ENCODE measurements at regions of chr3 and their contacts with region 1.

Region 1: DNA sequence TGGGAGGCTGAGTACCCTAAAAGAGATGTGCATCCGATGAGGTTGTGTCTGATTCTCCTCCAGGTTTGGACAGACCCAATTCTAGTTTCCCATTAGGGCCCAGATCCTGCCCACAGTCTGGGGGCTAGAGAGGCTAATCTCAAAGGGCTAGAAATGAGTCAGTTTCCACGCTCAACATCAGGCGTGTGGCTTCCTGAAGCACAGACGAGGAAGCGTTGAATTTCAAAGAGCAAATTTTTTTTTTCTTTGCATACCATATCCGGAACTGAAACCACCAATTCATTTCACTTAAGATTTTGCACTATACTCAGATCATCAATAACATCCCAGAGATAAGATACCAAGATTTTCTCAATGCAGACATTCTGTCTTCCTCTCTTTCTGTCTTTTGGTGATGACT is 173.8 kb upstream of the BCL6 start:
- DNase-seq: peak; percentile 69
- ATAC-seq: peak; percentile 50
- H3K4me3 Mint-ChIP-seq: peak overlapping the region; percentile 59
- H3K27ac Mint-ChIP-seq: peak overlapping the region; percentile 86
- H3K4me1 Mint-ChIP-seq: peaks cover 70% of the 10 kb centered on the region
- H3K27me3 Mint-ChIP-seq: peaks cover 2% of the 10 kb centered on the region

Region 2: DNA sequence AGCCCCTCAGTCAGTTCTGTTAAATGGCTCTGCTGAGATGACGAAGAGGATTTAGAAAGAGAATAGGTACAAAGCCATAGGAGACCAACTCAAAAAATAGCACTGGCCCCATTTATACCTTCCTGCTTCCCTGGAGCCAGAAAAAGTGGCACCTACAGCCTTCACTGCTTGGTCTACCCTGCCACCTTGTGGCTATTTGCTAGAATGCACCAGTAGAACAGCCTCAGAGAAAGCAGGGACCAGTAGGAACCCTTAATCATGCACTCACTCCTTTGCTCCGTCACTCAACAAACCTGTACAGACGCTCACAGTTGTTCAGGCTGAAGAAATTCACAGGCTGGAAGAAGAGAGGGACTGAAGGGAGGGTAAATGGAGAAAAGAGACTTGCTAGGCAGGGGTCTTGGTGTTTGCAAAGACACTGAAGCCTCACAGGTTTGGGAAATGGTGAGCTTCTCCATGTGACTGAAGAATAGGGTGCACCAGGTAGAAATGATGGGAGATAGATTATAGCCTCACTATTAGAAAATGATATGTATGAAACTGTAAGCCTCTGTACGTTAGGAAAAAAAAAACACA is 204.6 kb before region 1 on chr3:
- CTCF ChIA-PET with region 1: no interaction called
- POLR2A ChIA-PET with region 1: no interaction called
- intact Hi-C with region 1: no loop called
- DNase-seq: peak; percentile 82
- ATAC-seq: peak; percentile 80
- H3K4me3 Mint-ChIP-seq: no peak overlapping the region
- H3K27ac Mint-ChIP-seq: no peak overlapping the region
- H3K4me1 Mint-ChIP-seq: peaks cover 12% of the 10 kb centered on the region
- H3K27me3 Mint-ChIP-seq: no peaks in the 10 kb centered on the region

Region 3: GRCh38 chr3:187745201-187746058 is 173.6 kb before region 1 on chr3 and contains the start of gene BCL6:
- CTCF ChIA-PET with region 1: interaction called, 17 read pairs
- POLR2A ChIA-PET with region 1: interaction called, 5 read pairs
- intact Hi-C with region 1: loop called (anchors 1 kb)
- DNase-seq: peak; percentile 92
- ATAC-seq: peak; percentile 50
- H3K4me3 Mint-ChIP-seq: peak within 1 kb of the TSS; percentile 91
- H3K27ac Mint-ChIP-seq: peak within 1 kb of the TSS; percentile 99
- H3K4me1 Mint-ChIP-seq: peaks cover 63% of the 10 kb centered on the region
- H3K27me3 Mint-ChIP-seq: no peaks in the 10 kb centered on the region
- total RNA-seq, gene BCL6: 42.9 to 52.8 TPM

Region 4: DNA sequence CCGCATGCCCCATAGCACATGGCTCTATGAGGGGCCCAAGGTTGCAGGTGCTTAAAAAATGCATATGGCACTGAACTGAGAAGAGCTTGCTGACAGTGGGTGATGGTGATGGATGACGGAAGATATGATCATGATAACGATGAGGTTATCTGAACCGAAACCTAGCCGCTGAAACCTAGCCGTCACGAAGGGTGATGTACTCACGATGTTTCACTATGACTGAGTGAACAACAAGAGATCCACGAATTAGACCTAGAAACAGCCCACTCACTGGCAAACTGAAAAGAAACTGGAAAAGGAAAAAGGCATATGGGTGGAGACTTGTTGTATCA is 116.2 kb before region 1 on chr3:
- CTCF ChIA-PET with region 1: interaction called, 4 read pairs
- POLR2A ChIA-PET with region 1: interaction called, 3 read pairs
- intact Hi-C with region 1: loop called (anchors 1 kb)
- DNase-seq: peak; percentile 86
- ATAC-seq: peak; percentile 60
- H3K4me3 Mint-ChIP-seq: peak overlapping the region; percentile 34
- H3K27ac Mint-ChIP-seq: peak overlapping the region; percentile 81
- H3K4me1 Mint-ChIP-seq: peaks cover 93% of the 10 kb centered on the region
- H3K27me3 Mint-ChIP-seq: no peaks in the 10 kb centered on the region

Region 5: GRCh38 chr3:188061133-188061532 is 142.1 kb after region 1 on chr3:
- CTCF ChIA-PET with region 1: no interaction called
- POLR2A ChIA-PET with region 1: no interaction called
- intact Hi-C with region 1: loop called (anchors 1 kb)
- DNase-seq: peak; percentile 76
- ATAC-seq: peak; percentile 98
- H3K4me3 Mint-ChIP-seq: peak overlapping the region; percentile 25
- H3K27ac Mint-ChIP-seq: peak overlapping the region; percentile 77
- H3K4me1 Mint-ChIP-seq: peaks cover 35% of the 10 kb centered on the region
- H3K27me3 Mint-ChIP-seq: no peaks in the 10 kb centered on the region

Region 6: GRCh38 chr3:188257384-188258026 is 338.5 kb after region 1 on chr3:
- CTCF ChIA-PET with region 1: no interaction called
- POLR2A ChIA-PET with region 1: interaction called, 4 read pairs
- intact Hi-C with region 1: loop called in 1 of 2 experiments (anchors 1 kb)
- DNase-seq: no peak
- ATAC-seq: peak; percentile 12
- H3K4me3 Mint-ChIP-seq: no peak overlapping the region
- H3K27ac Mint-ChIP-seq: peak overlapping the region; percentile 62
- H3K4me1 Mint-ChIP-seq: peaks cover 46% of the 10 kb centered on the region
- H3K27me3 Mint-ChIP-seq: no peaks in the 10 kb centered on the region

Region 7: GRCh38 chr3:188339410-188340295 is 420.6 kb after region 1 on chr3:
- CTCF ChIA-PET with region 1: no interaction called
- POLR2A ChIA-PET with region 1: no interaction called
- intact Hi-C with region 1: loop called in 1 of 2 experiments (anchors 1 kb)
- DNase-seq: peak; percentile 76
- ATAC-seq: peak; percentile 89
- H3K4me3 Mint-ChIP-seq: peak overlapping the region; percentile 54
- H3K27ac Mint-ChIP-seq: peak overlapping the region; percentile 95
- H3K4me1 Mint-ChIP-seq: peaks cover 43% of the 10 kb centered on the region
- H3K27me3 Mint-ChIP-seq: no peaks in the 10 kb centered on the region

Region 8: GRCh38 chr3:188411750-188412149 is 492.7 kb after region 1 on chr3:
- CTCF ChIA-PET with region 1: no interaction called
- POLR2A ChIA-PET with region 1: no interaction called
- intact Hi-C with region 1: no loop called
- DNase-seq: no peak
- ATAC-seq: no peak
- H3K4me3 Mint-ChIP-seq: no peak overlapping the region
- H3K27ac Mint-ChIP-seq: no peak overlapping the region
- H3K4me1 Mint-ChIP-seq: no peaks in the 10 kb centered on the region
- H3K27me3 Mint-ChIP-seq: no peaks in the 10 kb centered on the region

Region 9: GRCh38 chr3:188458756-188459155 is 539.7 kb after region 1 on chr3:
- CTCF ChIA-PET with region 1: no interaction called
- POLR2A ChIA-PET with region 1: no interaction called
- intact Hi-C with region 1: no loop called
- DNase-seq: no peak
- ATAC-seq: no peak
- H3K4me3 Mint-ChIP-seq: no peak overlapping the region
- H3K27ac Mint-ChIP-seq: no peak overlapping the region
- H3K4me1 Mint-ChIP-seq: no peaks in the 10 kb centered on the region
- H3K27me3 Mint-ChIP-seq: no peaks in the 10 kb centered on the region

Region 10: DNA sequence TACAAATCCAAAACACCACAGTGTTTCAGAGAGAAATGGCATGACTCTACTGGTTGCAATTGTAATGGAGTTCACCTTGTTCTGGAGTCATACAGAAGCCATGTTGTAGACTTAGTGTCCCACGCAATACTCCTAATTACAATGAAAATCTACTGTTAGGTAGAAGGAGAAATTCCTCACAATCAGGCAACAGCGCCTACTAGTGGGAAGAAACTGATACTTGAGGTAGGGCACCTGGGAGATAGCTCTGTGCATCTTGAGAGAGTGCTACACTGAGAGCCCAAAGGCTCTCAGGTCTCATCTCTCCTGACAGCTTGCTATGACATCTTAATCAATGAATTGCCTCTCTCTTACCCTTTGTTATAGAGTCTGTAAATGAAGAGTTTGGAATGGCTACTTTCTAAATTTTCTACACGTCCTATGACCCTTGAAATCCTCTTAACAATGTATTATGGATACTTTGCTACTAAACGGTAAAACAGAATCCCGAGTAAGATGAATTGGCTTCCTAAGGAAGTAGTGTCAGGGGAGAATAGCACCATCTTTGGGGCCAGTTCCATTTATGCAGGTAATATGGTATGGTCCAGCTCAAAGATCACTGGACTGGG is 830.1 kb after region 1 on chr3:
- CTCF ChIA-PET with region 1: no interaction called
- POLR2A ChIA-PET with region 1: no interaction called
- intact Hi-C with region 1: loop called in 1 of 2 experiments (anchors 2 kb)
- DNase-seq: peak; percentile 59
- ATAC-seq: no peak
- H3K4me3 Mint-ChIP-seq: no peak overlapping the region
- H3K27ac Mint-ChIP-seq: no peak overlapping the region
- H3K4me1 Mint-ChIP-seq: peaks cover 30% of the 10 kb centered on the region
- H3K27me3 Mint-ChIP-seq: no peaks in the 10 kb centered on the region